Heart right ventricle (tissue), 16 donors: ENCODE measurements at regions of chr14 and their contacts with region 1.

Region 1: DNA sequence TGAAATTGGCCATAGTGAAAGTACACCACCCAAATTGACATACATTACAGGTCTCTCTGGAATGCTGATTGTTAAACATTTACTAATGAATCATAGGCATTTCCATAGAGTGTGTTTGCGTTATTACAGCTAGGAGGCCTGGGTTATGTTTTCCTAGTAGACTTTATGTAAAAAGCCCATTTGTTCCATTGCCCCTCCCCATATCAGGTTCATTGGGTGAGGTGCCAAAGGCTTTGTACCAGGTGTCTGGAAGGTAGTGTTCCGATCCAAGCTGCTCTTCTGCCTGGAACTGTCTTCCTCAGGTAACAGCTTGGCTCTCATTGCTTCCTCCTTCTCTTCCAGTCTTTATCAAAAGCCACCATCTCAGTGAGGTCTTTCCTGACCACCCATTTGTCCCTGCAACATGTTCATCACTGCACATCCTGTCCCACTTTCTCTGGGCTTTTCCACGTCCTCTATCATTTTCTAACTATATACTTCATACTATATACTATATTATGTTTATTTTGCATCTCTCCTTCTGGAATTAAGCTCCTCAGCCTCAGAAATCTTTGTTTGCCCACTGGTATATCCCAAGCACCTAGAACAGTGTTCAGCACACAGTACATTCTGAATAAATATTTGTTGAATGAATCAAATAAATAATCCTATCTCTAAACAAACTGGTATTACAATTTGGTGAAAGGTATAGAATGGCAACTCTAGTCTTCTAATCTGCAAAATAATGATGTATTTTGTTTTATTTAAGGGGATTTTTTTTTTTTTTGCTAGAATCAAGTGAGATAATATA is 252.3 kb downstream of the KTN1 start:
- DNase-seq: no peak
- ATAC-seq: no peak
- H3K4me3 ChIP-seq: no peak overlapping the region
- H3K27ac ChIP-seq: no peak overlapping the region
- H3K4me1 ChIP-seq: no peaks in the 10 kb centered on the region
- H3K27me3 ChIP-seq: no peaks in the 10 kb centered on the region
- CTCF ChIP-seq: no peak

Region 2: DNA sequence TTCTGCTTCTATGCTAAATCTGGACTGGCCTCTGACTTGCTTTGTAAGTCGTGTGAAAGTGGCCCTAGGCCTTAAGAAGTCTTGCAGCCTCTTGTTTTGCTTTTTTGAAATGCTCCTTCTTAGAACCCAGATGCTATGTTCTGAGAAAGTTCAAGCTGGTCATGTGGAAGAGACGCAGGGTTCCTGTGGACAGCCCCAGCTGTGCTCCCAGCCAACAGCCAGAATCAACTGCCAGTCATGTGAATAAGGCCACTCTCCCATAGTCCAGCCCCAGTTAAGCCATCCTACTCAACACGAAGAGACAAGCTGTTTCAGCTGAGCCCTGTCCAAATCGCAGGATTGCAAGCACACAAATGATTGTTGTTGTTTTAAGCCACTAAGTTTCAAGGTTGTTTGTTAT is 354.6 kb before region 1 on chr14:
- intact Hi-C with region 1: no loop called
- DNase-seq: peak; percentile 21 to 50
- ATAC-seq: peak; percentile 72 to 96 (median 89)
- H3K4me3 ChIP-seq: no peak overlapping the region
- H3K27ac ChIP-seq: peak overlapping the region in 3 of 10 donors; percentile 44 to 66 (median 49)
- H3K4me1 ChIP-seq: peaks cover 0 to 15% (median 4%) of the 10 kb centered on the region in 9 donors
- H3K27me3 ChIP-seq: no peaks in the 10 kb centered on the region
- CTCF ChIP-seq: no peak

Region 3: GRCh38 chr14:55752586-55753390 is 79.5 kb before region 1 on chr14:
- intact Hi-C with region 1: loop called in 1 of 10 experiments (anchors 10 kb)
- DNase-seq: no peak
- ATAC-seq: no peak
- H3K4me3 ChIP-seq: no peak overlapping the region
- H3K27ac ChIP-seq: no peak overlapping the region
- H3K4me1 ChIP-seq: no peaks in the 10 kb centered on the region
- H3K27me3 ChIP-seq: no peaks in the 10 kb centered on the region
- CTCF ChIP-seq: no peak